Ascending aorta (tissue), 2 donors: ENCODE measurements at regions of chr7 and their contacts with region 1.

Region 1: GRCh38 chr7:63931985-63932577 is 66.6 kb upstream of the ZNF722 start:
- DNase-seq: no peak
- H3K4me3 ChIP-seq: no peak overlapping the region
- H3K27ac ChIP-seq: no peak overlapping the region
- H3K4me1 ChIP-seq: no peaks in the 10 kb centered on the region
- H3K27me3 ChIP-seq: no peaks in the 10 kb centered on the region
- CTCF ChIP-seq: no peak

Region 2: GRCh38 chr7:63918986-63919385 is 13.1 kb before region 1 on chr7:
- intact Hi-C with region 1: no loop called
- DNase-seq: no peak
- H3K4me3 ChIP-seq: no peak overlapping the region
- H3K27ac ChIP-seq: no peak overlapping the region
- H3K4me1 ChIP-seq: no peaks in the 10 kb centered on the region
- H3K27me3 ChIP-seq: no peaks in the 10 kb centered on the region
- CTCF ChIP-seq: no peak

Region 3: DNA sequence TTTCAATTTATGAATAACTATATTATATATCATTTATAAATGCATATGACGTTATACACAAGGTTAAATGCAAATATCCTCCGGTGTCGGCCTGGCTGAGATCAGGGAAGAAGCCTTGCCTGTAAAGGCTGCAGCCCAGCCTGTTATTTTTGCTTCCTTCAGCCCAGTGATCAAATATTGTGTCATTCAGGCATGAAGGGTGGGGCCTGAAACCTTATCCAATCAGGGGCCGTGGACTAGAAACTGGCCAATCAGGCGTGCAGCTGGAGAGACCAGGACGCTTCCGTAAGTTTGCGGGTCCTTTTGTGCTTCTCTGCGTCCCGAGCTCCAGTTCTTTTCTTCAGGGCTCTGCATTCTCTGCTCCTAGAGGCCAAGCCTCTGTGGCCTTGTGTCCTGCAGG is 66.5 kb after region 1 on chr7 and contains the start of gene ZNF722:
- intact Hi-C with region 1: loop called (anchors 10 kb)
- DNase-seq: no peak
- H3K4me3 ChIP-seq: no peak within 1 kb of the TSS
- H3K27ac ChIP-seq: no peak within 1 kb of the TSS
- H3K4me1 ChIP-seq: no peaks in the 10 kb centered on the region
- H3K27me3 ChIP-seq: no peaks in the 10 kb centered on the region
- CTCF ChIP-seq: no peak
- total RNA-seq, gene ZNF722: not detected

Region 4: GRCh38 chr7:64611406-64612116 is 679.5 kb after region 1 on chr7:
- intact Hi-C with region 1: no loop called
- DNase-seq: no peak
- H3K4me3 ChIP-seq: no peak overlapping the region
- H3K27ac ChIP-seq: no peak overlapping the region
- H3K4me1 ChIP-seq: no peaks in the 10 kb centered on the region
- H3K27me3 ChIP-seq: no peaks in the 10 kb centered on the region
- CTCF ChIP-seq: no peak

Region 5: DNA sequence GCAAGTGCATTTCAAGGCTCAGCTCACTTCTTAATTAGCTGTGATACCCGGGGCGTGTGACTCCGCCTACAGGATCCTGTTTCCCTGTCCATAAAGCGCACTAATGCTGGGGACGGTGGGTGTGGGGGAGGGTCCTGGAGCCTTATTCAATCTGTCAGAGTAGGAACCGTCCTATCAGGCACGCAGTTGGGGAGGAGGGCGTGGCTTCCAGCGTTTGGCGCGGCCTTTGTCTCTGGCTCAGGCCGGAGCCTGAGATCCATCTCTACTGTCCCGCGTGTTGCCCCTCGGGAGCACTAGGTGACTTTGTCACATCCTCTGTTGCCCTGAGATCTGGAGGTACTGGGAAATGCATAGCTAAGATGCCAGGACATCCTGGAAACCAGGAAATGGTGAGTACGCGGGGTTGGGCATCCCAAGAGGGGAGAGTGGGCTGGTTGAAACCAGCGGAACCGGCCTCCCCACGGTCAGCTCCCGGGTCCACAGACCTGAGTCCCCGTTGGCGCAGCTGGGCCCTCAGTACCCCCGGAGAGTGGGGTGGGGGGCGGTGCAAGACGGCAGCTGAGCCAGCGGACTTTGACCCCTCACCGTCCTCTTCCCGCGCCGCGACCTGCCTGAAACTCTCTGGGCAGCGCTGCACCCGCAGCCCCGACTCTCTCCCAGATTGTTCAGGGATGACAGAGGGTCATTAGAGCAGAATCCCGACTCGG is 1337.2 kb after region 1 on chr7:
- intact Hi-C with region 1: no loop called
- DNase-seq: no peak
- H3K4me3 ChIP-seq: peak overlapping the region; percentile 39 to 63
- H3K27ac ChIP-seq: no peak overlapping the region
- H3K4me1 ChIP-seq: no peaks in the 10 kb centered on the region
- H3K27me3 ChIP-seq: no peaks in the 10 kb centered on the region
- CTCF ChIP-seq: no peak